ENCODE measurements at regions of chr14 and their contacts with region 1.

Region 1: DNA sequence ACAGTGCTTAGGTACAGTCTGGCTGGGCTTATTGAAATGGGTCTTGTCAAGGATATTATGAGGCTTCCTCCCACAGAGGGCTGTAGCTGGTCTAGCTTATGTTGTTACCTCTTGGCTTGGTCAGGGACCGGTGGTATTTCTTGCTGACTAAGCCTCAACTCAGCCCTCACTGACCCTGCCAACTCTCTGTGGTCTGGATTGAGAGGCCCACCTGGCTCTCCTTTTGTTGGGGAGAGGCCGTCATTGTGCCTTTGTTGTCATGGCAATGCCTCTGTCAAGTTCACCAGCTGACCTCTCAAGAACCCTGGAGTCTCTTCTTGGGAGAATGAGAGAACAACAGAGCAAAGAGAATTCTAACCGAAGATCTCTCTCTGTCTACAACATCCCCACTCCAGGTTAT is 245.6 kb upstream of the NPAS3 start:
- DNase-seq: peak; percentile 94
- ATAC-seq: peak; percentile 91
- H3K4me3 ChIP-seq: peak overlapping the region; percentile 50
- H3K27ac ChIP-seq: peak overlapping the region; percentile 94
- H3K4me1 ChIP-seq: peaks cover 37% of the 10 kb centered on the region
- H3K27me3 ChIP-seq: no peaks in the 10 kb centered on the region
- CTCF ChIP-seq: no peak

Region 2: GRCh38 chr14:32611752-32612151 is 81.4 kb before region 1 on chr14:
- CTCF ChIA-PET with region 1: no interaction called
- POLR2A ChIA-PET with region 1: no interaction called
- intact Hi-C with region 1: loop called (anchors 5 kb)
- DNase-seq: peak; percentile 93
- ATAC-seq: peak; percentile 99
- H3K4me3 ChIP-seq: no peak overlapping the region
- H3K27ac ChIP-seq: peak overlapping the region; percentile 62
- H3K4me1 ChIP-seq: peaks cover 28% of the 10 kb centered on the region
- H3K27me3 ChIP-seq: no peaks in the 10 kb centered on the region
- CTCF ChIP-seq: no peak

Region 3: GRCh38 chr14:32761381-32761968 is 68.4 kb after region 1 on chr14:
- CTCF ChIA-PET with region 1: no interaction called
- POLR2A ChIA-PET with region 1: no interaction called
- intact Hi-C with region 1: no loop called
- DNase-seq: peak; percentile 37
- ATAC-seq: peak; percentile 79
- H3K4me3 ChIP-seq: no peak overlapping the region
- H3K27ac ChIP-seq: no peak overlapping the region
- H3K4me1 ChIP-seq: peaks cover 8% of the 10 kb centered on the region
- H3K27me3 ChIP-seq: no peaks in the 10 kb centered on the region
- CTCF ChIP-seq: no peak